Activated CD8-positive, alpha-beta T cell treated with anti-CD3 and anti-CD28 coated beads, Interleukin-2, amount 10 ng/mL, durations not matched to agents 7 days and 5 days (primary cell): ENCODE measurements at regions of chr22 and their contacts with region 1.

Region 1: DNA sequence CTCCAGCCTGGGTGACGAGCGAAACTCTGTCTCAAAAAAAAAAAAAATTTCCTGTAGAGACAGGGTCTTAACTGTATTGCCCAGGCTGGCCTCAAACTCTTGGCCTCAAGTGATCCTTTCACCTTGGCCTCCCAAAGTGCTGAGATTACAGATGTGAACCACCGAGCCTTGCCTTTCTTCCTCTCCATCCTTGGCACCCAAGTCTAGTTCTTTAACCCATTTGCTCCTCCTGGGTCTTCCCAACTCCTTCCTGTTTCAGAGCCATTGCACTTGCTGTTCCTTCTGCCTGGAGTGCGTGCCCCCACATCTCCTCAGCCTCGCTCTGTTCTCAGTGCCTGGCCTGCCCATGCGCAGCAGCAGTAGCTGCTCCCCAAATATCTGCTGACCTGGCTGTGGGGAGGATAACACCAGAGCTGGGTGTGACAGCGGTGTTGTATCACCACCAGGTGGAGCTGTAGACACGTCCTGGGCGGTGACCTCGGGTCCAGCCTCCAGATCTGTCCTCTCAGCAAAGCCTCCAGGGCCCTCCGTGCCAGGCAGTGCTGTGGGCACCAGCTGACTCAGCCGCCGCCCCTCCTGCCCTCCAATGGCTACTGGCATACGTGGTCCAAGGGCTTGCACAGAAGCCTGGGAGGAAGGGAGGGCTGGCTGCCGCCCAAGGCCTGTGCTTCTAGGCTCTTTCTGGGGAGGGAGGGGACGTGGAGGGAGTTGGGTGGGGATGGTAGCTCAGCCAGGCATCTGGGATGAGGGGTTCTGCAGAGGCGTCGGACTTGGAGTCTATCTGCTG is 22.0 kb downstream of the TEF start:
- DNase-seq: peak; percentile 91
- ATAC-seq: peak; percentile 99
- H3K4me3 Mint-ChIP-seq: no peak overlapping the region
- H3K27ac Mint-ChIP-seq: peak overlapping the region; percentile 35
- H3K4me1 Mint-ChIP-seq: peaks cover 15% of the 10 kb centered on the region
- H3K27me3 Mint-ChIP-seq: no peaks in the 10 kb centered on the region

Region 2: DNA sequence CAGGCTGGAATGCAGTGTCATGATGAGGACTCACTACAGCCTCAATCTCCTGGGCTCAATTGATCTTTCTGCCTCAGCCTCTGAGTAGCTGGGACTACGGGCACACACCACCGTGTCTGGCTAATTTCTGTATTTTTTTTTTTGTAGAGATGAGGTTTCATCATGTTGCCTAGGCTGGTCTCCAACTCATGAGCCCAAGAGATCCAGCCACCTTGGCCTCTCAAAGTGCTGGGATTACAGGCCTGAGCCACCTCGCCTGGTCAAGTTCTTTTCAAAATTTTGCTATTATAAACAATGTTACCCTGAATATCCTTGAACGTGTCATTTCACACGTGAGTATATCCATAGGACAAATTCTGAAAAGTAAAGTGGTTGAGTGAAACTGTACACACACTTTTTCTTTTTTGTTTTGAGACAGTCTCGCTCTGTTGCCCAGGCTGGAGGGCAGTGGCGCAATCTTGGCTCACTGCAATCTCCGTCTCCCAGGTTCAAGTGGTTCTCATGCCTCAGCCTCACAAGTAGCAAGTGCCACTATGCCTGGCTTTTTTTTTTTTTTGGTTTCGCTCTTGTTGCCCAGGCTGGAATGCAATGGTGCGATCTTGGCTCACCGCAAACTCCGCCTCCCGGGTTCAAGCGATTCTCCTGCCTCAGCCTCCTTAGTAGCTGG is 332.9 kb before region 1 on chr22:
- CTCF ChIA-PET with region 1: no interaction called
- POLR2A ChIA-PET with region 1: no interaction called
- DNase-seq: no peak
- ATAC-seq: no peak
- H3K4me3 Mint-ChIP-seq: no peak overlapping the region
- H3K27ac Mint-ChIP-seq: no peak overlapping the region
- H3K4me1 Mint-ChIP-seq: peaks cover 11% of the 10 kb centered on the region
- H3K27me3 Mint-ChIP-seq: no peaks in the 10 kb centered on the region

Region 3: DNA sequence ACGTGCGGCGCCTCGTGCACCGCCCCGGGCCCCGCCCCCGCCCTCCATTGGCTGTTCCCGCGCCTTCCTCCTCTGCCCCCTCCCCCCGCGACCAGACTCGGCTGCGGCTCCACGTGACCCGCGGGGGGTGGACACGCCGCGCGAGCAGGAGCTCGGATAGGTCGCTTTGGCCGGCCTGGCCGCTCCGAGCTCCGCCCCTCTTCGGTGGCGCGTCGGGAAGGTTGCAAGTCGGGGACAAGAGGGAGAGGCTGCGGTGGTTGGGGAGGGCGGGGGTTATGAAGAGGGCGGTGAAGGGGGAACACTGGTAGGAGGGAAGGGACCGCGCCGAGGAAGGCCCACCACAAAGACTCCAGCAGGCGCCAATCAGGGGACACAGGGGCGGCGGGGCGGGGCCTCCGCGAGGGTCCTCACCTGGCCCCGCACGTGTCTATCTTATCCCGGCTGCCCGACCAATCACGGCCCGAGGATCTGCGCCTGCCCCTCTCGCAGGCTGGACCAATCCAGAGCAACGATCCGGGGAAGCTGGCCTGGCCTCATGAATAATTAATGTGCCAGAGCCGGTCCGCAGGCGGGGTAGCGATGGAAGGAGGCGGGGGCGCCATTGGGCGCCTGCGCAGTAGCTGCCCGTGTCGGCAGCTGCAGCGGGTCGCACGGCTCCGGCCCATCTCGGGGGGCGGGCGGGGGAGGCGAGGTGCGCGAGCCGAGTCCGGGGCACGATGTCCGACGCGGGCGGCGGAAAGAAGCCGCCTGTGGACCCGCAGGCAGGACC is 22.2 kb before region 1 on chr22 and contains the start of gene TEF:
- CTCF ChIA-PET with region 1: interaction called, 12 read pairs
- POLR2A ChIA-PET with region 1: interaction called, 3 read pairs
- DNase-seq: peak; percentile 98
- ATAC-seq: peak; percentile 93
- H3K4me3 Mint-ChIP-seq: peak within 1 kb of the TSS; percentile 87
- H3K27ac Mint-ChIP-seq: peak within 1 kb of the TSS; percentile 96
- H3K4me1 Mint-ChIP-seq: peaks cover 17% of the 10 kb centered on the region
- H3K27me3 Mint-ChIP-seq: peaks cover 6% of the 10 kb centered on the region
- total RNA-seq, gene TEF: 2.9 to 3.0 TPM

Region 4: DNA sequence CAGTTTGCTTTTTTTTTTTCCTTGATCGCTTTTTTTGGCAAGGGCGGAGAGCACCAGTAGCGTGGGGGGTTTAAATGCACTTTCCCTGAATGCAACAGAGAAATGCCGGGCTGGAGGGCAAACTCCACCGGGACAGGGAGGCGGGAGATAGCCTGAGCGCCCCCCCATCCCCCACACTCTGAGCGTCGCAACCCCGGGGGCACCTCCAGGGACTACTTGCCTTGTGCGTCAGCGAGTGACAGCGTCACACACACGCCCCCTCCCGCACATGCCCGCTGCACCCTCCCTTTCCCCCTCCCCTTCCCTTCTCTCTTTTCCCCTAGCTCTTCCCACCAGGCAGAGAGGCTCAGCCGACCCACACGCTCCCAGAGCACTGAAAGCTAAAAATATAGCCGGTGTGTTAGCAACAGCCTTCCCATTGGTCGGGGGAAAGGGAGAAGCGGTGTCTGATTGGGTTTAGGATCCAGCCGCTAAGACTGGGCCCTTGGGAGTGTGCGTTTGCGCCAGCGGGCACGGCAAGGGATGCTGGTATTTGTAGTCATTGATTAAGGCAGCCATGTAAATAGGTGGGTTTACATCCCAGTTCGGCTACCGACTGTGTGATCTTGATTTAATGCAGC is 44.6 kb after region 1 on chr22:
- CTCF ChIA-PET with region 1: interaction called, 25 read pairs
- POLR2A ChIA-PET with region 1: interaction called, 15 read pairs
- DNase-seq: peak; percentile 96
- ATAC-seq: peak; percentile 71
- H3K4me3 Mint-ChIP-seq: peak overlapping the region; percentile 90
- H3K27ac Mint-ChIP-seq: peak overlapping the region; percentile 100
- H3K4me1 Mint-ChIP-seq: peaks cover 12% of the 10 kb centered on the region
- H3K27me3 Mint-ChIP-seq: no peaks in the 10 kb centered on the region

Region 5: DNA sequence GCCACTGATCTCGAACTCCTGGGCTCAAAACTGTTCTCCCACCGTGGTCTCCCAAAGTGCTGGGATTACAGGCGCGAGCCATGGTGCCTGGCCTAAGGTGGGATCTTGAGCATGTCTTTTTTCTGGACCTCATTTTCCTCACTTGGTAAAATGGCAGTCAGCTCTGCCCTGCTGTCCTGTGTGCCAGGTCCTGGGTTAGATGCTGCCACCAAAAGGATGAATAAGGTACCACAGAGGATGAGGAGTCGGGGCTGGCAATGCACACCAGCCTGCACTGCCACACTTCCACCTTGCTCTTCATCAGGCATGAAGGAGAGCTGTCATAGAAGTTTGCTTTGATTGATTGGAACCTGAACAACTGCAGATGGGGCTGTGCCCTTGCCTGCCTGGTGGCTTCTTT is 97.5 kb after region 1 on chr22:
- CTCF ChIA-PET with region 1: interaction called, 39 read pairs
- POLR2A ChIA-PET with region 1: no interaction called
- DNase-seq: peak; percentile 32
- ATAC-seq: peak; percentile 71
- H3K4me3 Mint-ChIP-seq: no peak overlapping the region
- H3K27ac Mint-ChIP-seq: no peak overlapping the region
- H3K4me1 Mint-ChIP-seq: no peaks in the 10 kb centered on the region
- H3K27me3 Mint-ChIP-seq: no peaks in the 10 kb centered on the region

Region 6: GRCh38 chr22:41526837-41527799 is 123.4 kb after region 1 on chr22:
- CTCF ChIA-PET with region 1: interaction called, 129 read pairs
- POLR2A ChIA-PET with region 1: no interaction called
- DNase-seq: peak; percentile 71
- ATAC-seq: peak; percentile 74
- H3K4me3 Mint-ChIP-seq: no peak overlapping the region
- H3K27ac Mint-ChIP-seq: peak overlapping the region; percentile 60
- H3K4me1 Mint-ChIP-seq: peaks cover 13% of the 10 kb centered on the region
- H3K27me3 Mint-ChIP-seq: no peaks in the 10 kb centered on the region